MCF 10A (cell line): ENCODE measurements at regions of chr2 and their contacts with region 1.

Region 1: DNA sequence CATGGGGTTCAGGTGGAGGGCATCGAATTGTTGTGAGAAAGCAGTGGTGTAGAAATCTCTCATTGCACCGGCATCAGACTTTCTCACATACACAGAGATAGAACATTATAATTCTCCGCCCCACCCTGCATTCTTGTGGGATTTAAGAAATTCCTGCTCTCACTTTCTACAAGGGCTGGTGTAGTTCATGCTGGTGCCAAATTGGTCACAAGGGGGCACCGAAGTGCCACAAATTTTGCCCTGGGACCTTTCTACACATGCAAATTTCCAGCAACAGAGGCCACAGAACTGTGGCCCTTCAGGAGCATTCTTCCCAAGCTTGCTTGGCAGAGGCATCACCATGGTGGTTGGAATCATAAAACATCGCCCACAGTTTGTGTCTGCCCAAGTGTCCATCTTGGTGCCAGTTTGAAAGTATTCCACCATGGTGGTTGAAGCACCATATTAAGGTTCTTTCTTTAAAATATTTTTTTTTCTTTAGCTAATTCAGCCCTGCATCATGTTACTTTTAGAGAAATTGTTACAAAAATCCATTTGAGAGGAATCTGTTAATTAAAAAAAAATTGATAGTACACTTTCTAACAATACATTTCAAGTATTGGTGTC is 521.2 kb upstream of the FANCL start:
- DNase-seq: peak; percentile 81
- H3K4me3 Mint-ChIP-seq: no peak overlapping the region
- H3K27ac Mint-ChIP-seq: no peak overlapping the region
- H3K4me1 Mint-ChIP-seq: peaks cover 6% of the 10 kb centered on the region
- H3K27me3 Mint-ChIP-seq: no peaks in the 10 kb centered on the region
- CTCF ChIP-seq: peak; percentile 69

Region 2: DNA sequence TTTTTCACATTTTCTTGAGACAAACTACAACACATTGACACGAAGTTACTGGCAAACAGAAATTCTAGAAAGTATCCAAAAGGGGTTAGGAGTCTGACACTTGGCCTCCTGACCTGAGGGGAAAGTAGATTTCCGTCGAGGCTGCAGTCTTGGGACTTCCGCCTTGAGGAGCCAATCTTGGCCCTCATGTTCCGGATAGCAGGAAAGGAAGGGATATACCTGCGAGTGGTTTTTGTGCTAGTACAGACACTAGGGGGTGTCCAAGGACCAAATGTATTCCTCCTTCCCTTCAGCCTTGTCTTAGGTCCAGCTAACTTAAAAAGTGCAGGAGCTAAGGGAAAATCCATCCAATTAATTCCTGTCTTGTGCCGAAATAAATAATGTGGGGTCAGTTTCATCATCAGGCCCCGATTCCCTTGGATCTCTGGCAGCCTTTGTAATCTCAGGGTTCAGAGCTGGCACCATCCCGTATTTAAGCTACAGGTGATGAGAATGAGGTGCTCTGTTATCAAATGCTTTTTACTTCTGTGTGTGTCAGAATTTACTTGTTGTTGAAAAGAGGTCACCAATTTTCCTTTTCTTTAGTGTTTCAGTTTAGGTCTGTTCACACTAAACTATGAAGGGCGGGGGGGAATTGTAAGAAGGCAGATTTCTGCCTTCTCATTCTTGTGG is 191.0 kb before region 1 on chr2:
- CTCF ChIA-PET with region 1: interaction called, 5 read pairs
- POLR2A ChIA-PET with region 1: no interaction called
- intact Hi-C with region 1: loop called (anchors 1 kb)
- DNase-seq: peak; percentile 88
- H3K4me3 Mint-ChIP-seq: no peak overlapping the region
- H3K27ac Mint-ChIP-seq: peak overlapping the region; percentile 75
- H3K4me1 Mint-ChIP-seq: peaks cover 18% of the 10 kb centered on the region
- H3K27me3 Mint-ChIP-seq: no peaks in the 10 kb centered on the region
- CTCF ChIP-seq: peak; percentile 87

Region 3: GRCh38 chr2:59182249-59182648 is 420.0 kb after region 1 on chr2:
- CTCF ChIA-PET with region 1: no interaction called
- POLR2A ChIA-PET with region 1: no interaction called
- intact Hi-C with region 1: loop called (anchors 2 kb)
- DNase-seq: peak; percentile 32
- H3K4me3 Mint-ChIP-seq: no peak overlapping the region
- H3K27ac Mint-ChIP-seq: no peak overlapping the region
- H3K4me1 Mint-ChIP-seq: peaks cover 6% of the 10 kb centered on the region
- H3K27me3 Mint-ChIP-seq: no peaks in the 10 kb centered on the region
- CTCF ChIP-seq: no peak

Region 4: GRCh38 chr2:59449269-59449668 is 687.0 kb after region 1 on chr2:
- CTCF ChIA-PET with region 1: interaction called, 6 read pairs
- POLR2A ChIA-PET with region 1: no interaction called
- intact Hi-C with region 1: loop called (anchors 10 kb)
- DNase-seq: peak; percentile 51
- H3K4me3 Mint-ChIP-seq: no peak overlapping the region
- H3K27ac Mint-ChIP-seq: no peak overlapping the region
- H3K4me1 Mint-ChIP-seq: no peaks in the 10 kb centered on the region
- H3K27me3 Mint-ChIP-seq: no peaks in the 10 kb centered on the region
- CTCF ChIP-seq: peak; percentile 25

Region 5: GRCh38 chr2:60119791-60120190 is 1357.5 kb after region 1 on chr2:
- CTCF ChIA-PET with region 1: no interaction called
- POLR2A ChIA-PET with region 1: interaction called, 5 read pairs
- intact Hi-C with region 1: loop called (anchors 5 kb)
- DNase-seq: peak; percentile 40
- H3K4me3 Mint-ChIP-seq: no peak overlapping the region
- H3K27ac Mint-ChIP-seq: no peak overlapping the region
- H3K4me1 Mint-ChIP-seq: peaks cover 6% of the 10 kb centered on the region
- H3K27me3 Mint-ChIP-seq: no peaks in the 10 kb centered on the region
- CTCF ChIP-seq: peak; percentile 8